ENCODE measurements at regions of chr12 and their contacts with region 1.

Region 1: DNA sequence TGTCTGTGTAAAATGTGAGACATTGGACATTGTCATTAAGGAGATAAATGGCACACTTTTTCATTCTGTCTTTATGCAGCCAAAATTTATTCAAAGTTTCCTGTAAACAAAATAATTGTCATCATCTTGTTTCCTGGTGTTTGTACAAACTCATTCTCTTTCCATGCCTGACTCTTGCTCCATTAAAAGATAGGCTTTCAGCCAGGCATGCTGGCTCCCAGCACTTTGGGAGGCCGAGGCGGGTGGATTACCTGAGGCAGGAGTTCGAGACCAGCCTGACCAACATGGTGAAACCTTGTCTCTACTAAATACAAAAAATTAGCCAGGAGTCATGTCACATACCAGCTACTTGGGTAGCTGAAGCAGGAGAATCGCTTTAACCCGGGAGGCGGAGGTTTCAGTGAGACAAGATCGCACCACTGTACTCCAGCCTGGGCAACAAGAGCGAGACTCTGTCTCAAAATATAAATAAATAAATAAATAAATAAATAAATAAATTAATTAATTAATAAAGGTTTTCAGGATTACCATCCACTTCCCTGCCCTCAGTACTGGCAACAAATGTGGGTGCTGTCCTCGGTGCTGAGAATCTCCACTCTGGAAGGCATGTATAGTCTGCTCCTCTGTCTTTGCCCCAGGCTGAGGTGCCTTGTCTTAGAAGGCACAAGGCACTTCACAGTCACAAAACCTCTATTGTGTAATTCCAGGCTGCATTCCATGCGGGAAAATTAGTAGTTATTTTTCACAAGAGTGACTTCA is 83.2 kb downstream of the PAH start:
- DNase-seq: peak in 1 of 2 experiments; percentile 71
- H3K4me3 ChIP-seq: no peak overlapping the region
- H3K27ac ChIP-seq: no peak overlapping the region
- H3K4me1 ChIP-seq: no peaks in the 10 kb centered on the region
- H3K27me3 ChIP-seq: no peaks in the 10 kb centered on the region
- CTCF ChIP-seq: no peak
- EP300 ChIP-seq: no peak
- POLR2A ChIP-seq: no peak
- RAD21 ChIP-seq: no peak

Region 2: DNA sequence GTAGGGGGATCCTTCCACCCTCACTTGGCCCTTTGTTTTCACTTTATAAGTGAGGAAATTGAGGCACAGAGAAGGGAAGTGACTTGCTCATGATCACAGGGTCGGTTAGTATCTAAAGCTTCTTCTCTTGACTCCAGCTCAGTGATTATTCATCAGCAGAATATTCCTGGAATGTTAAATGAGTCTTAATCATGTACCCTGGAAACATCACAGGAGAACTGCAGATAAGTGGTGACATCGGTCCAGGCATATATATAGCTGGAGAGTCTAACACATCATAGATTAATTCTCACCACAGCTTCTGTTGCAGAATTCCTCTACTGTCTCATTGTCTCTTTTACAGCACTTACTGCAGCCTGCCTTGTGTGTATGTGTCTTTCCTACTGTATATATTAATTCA is 13.3 kb after region 1 on chr12:
- CTCF ChIA-PET with region 1: interaction called, 14 read pairs
- POLR2A ChIA-PET with region 1: no interaction called
- DNase-seq: no peak
- H3K4me3 ChIP-seq: no peak overlapping the region
- H3K27ac ChIP-seq: no peak overlapping the region
- H3K4me1 ChIP-seq: no peaks in the 10 kb centered on the region
- H3K27me3 ChIP-seq: no peaks in the 10 kb centered on the region
- CTCF ChIP-seq: no peak
- EP300 ChIP-seq: no peak
- POLR2A ChIP-seq: no peak
- RAD21 ChIP-seq: no peak

Measured in H1 (cell line).